AG04450 (cell line): ENCODE measurements at regions of chr2 and their contacts with region 1.

Region 1: DNA sequence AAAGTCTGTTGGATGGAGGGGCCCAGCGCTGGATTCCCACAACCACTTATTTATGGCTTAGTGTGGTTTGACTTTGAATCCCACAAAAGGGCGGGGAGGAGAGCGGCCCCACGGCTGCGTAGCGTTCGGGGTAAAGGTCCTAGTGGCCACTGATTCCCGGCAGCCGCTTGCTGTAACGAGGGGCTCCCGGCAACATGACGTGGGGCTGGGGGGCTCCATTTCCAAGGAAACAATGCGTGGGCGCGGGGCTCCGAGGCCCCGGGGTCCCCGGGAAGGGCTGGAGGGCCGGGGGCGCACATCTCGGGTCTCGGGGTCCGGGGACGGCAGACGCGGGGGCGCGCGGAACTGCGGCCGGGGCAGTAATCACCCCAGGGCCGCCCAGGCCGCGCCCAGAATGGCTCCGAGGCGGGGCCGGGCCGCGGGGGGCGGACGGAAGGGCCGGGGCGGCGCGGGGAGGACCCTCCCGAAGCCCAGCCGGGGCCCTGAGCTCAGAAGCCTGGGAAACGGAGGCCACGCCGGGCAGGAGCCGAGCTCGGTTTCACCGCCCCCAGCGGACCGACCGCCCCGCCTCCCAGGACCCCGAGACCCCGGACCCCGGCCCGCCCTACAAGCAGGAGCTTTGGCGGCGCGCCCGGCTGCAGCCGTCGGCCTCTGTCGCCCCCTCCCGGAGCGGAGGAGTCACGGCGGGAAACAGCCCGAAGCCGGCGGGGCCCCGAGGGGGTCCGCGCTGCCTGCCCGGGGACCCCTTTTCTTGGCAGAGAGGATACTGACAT is 11.9 kb upstream of the MLPH start:
- DNase-seq: peak; percentile 51
- H3K4me3 ChIP-seq: peak overlapping the region; percentile 64
- H3K27ac ChIP-seq: peak overlapping the region; percentile 90
- H3K27me3 ChIP-seq: no peaks in the 10 kb centered on the region
- CTCF ChIP-seq: peak; percentile 74

Region 2: GRCh38 chr2:236745420-236746197 is 729.5 kb before region 1 on chr2:
- CTCF ChIA-PET with region 1: no interaction called
- POLR2A ChIA-PET with region 1: no interaction called
- DNase-seq: no peak
- H3K4me3 ChIP-seq: no peak overlapping the region
- H3K27ac ChIP-seq: no peak overlapping the region
- H3K27me3 ChIP-seq: peaks cover 32% of the 10 kb centered on the region
- CTCF ChIP-seq: no peak

Region 3: GRCh38 chr2:237441605-237442274 is 33.4 kb before region 1 on chr2:
- CTCF ChIA-PET with region 1: interaction called, 11 read pairs
- POLR2A ChIA-PET with region 1: interaction called, 4 read pairs
- DNase-seq: peak; percentile 66
- H3K4me3 ChIP-seq: no peak overlapping the region
- H3K27ac ChIP-seq: no peak overlapping the region
- H3K27me3 ChIP-seq: no peaks in the 10 kb centered on the region
- CTCF ChIP-seq: no peak

Region 4: GRCh38 chr2:237500681-237501424 is 25.7 kb after region 1 on chr2:
- CTCF ChIA-PET with region 1: interaction called, 11 read pairs
- POLR2A ChIA-PET with region 1: interaction called, 6 read pairs
- DNase-seq: peak; percentile 97
- H3K4me3 ChIP-seq: peak overlapping the region; percentile 18
- H3K27ac ChIP-seq: peak overlapping the region; percentile 96
- H3K27me3 ChIP-seq: no peaks in the 10 kb centered on the region
- CTCF ChIP-seq: no peak

Region 5: DNA sequence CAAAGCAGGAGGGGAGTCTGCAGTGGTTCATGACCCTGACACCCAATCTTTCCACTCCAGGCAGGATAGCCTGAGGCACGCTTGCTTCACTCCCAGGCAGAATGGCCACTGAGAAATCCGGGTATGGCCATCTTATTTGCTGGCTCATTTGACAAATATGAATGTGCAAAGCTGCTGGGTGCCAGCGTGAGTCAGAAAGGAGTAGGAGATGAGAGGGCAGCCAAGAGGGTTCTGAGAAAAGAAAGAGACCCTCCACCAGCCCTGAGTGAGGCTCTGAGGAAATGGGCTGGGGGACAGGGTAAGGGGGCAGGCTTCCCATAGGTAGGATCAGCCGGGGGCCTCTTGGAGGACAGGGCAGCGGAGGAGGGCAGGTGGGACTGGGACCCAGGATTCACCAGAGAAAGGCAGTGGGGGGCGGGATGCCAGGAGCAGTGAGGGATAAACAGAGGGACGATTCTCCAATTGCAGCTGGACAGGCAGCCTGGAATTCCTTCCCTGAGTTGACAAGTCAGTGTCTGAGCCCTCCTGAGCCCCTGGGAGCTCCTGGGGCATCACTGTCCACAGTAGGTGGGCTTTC is 399.6 kb after region 1 on chr2:
- CTCF ChIA-PET with region 1: no interaction called
- POLR2A ChIA-PET with region 1: no interaction called
- DNase-seq: no peak
- H3K4me3 ChIP-seq: no peak overlapping the region
- H3K27ac ChIP-seq: peak overlapping the region; percentile 57
- H3K27me3 ChIP-seq: no peaks in the 10 kb centered on the region
- CTCF ChIP-seq: no peak